Natural killer cell (primary cell): ENCODE measurements at regions of chr19 and their contacts with region 1.

Region 1: GRCh38 chr19:12789904-12790619 is 1.2 kb upstream of the JUNB start:
- DNase-seq: peak; percentile 94 to 95
- ATAC-seq: peak; percentile 35 to 56 (median 41)
- H3K4me3 ChIP-seq: peak overlapping the region; percentile 95
- H3K4me3 Mint-ChIP-seq: peak overlapping the region; percentile 96
- H3K27ac ChIP-seq: peak overlapping the region; percentile 93
- H3K27ac Mint-ChIP-seq: peak overlapping the region; percentile 97 to 99
- H3K4me1 ChIP-seq: peaks cover 57% of the 10 kb centered on the region
- H3K4me1 Mint-ChIP-seq: peaks cover 28 to 38% of the 10 kb centered on the region in 2 donors
- H3K27me3 ChIP-seq: no peaks in the 10 kb centered on the region
- H3K27me3 Mint-ChIP-seq: no peaks in the 10 kb centered on the region
- CTCF ChIP-seq: no peak

Region 2: DNA sequence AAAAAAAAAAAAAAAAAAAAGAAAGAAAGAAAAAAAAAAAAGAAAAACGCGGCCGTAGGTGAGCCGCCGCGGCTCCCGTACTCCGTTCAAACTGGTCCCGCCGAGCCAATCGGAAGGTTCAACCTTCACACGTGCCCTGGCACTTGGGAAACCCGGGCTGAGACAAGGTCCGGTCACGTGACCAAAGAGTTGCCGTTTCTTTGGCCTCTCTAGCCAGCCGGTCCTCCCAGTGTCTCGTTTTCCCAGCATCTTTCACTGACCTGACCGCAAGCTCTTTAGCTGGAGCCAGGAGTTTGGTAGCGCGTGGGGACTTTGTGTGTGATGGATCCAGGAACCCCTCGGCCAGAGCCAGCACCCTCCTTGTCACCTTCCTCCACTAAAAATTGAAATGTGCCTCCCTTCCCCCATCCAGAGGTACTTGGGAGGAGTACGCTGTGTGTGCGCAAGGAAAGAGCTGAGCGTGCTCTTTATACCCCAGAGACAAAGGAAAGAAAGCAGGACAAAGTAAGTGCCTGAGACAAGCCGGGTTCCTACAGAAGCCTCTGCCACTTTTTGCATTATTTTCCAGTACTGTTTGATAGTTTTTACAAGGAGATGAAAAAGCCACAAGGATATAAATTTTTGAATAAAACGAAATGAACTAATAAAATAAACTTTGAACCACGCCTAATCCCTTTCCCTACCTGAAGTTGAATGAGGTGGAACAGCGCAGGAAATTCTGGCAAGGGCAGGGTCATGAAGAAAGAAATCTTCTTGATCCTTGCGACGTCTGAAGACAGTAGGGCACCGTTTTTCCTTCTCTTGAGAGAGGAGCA is 67.3 kb before region 1 on chr19:
- intact Hi-C with region 1: loop called (anchors 5 kb)
- DNase-seq: peak; percentile 87 to 99
- ATAC-seq: peak; percentile 87 to 97 (median 95)
- H3K4me3 ChIP-seq: peak overlapping the region; percentile 60
- H3K4me3 Mint-ChIP-seq: peak overlapping the region; percentile 93
- H3K27ac ChIP-seq: peak overlapping the region; percentile 44
- H3K27ac Mint-ChIP-seq: peak overlapping the region; percentile 91 to 96
- H3K4me1 ChIP-seq: peaks cover 36% of the 10 kb centered on the region
- H3K4me1 Mint-ChIP-seq: peaks cover 26 to 42% of the 10 kb centered on the region in 2 donors
- H3K27me3 ChIP-seq: no peaks in the 10 kb centered on the region
- H3K27me3 Mint-ChIP-seq: no peaks in the 10 kb centered on the region
- CTCF ChIP-seq: no peak

Region 3: DNA sequence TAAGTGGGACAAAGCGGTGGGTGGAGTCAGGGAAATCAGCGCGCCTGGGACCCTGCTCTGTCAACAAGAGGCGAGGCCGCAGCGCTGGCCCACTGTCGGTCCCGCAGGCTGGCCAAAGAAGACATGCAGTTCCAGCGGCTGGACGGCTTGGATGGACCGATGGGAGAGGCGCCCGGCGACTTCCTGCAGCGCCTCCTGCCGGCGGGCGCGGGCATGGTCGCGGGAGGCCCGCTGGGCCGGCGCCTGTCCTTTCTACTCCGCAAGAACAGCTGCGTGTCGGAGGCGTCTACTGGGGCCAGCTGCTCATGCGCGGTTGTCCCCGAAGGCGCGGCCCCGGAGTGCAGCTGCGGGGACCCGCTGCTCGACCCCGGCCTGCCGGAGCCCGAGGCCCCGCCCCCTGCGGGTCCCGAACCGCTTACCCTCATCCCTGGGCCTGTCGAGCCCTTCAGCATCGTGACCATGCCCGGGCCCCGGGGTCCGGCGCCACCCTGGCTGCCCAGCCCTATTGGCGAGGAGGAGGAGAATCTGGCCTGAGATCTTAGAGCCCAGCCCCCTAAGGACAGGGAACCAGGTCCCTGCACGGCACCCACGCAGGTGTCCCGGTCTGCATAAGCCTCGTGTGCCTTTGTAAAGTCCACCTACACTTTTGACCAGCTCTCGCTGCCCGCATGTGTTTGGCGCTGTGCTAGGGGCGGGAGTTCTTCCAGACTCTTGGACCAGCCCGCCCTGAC is 32.4 kb before region 1 on chr19:
- intact Hi-C with region 1: no loop called
- DNase-seq: peak; percentile 70 to 77
- ATAC-seq: peak; percentile 80 to 83 (median 82)
- H3K4me3 ChIP-seq: no peak overlapping the region
- H3K4me3 Mint-ChIP-seq: no peak overlapping the region
- H3K27ac ChIP-seq: no peak overlapping the region
- H3K27ac Mint-ChIP-seq: no peak overlapping the region
- H3K4me1 ChIP-seq: peaks cover 9% of the 10 kb centered on the region
- H3K4me1 Mint-ChIP-seq: peaks cover 0 to 5% of the 10 kb centered on the region in 2 donors
- H3K27me3 ChIP-seq: peaks cover 2% of the 10 kb centered on the region
- H3K27me3 Mint-ChIP-seq: peaks cover 0 to 9% of the 10 kb centered on the region in 2 donors
- CTCF ChIP-seq: peak; percentile 83

Region 4: GRCh38 chr19:12938234-12939025 is 148.4 kb after region 1 on chr19 and contains the start of gene CALR:
- intact Hi-C with region 1: loop called (anchors 5 kb)
- DNase-seq: peak; percentile 99
- ATAC-seq: peak; percentile 84 to 96 (median 87)
- H3K4me3 ChIP-seq: peak within 1 kb of the TSS; percentile 85
- H3K4me3 Mint-ChIP-seq: peak within 1 kb of the TSS; percentile 96
- H3K27ac ChIP-seq: peak within 1 kb of the TSS; percentile 78
- H3K27ac Mint-ChIP-seq: peak within 1 kb of the TSS; percentile 96
- H3K4me1 ChIP-seq: peaks cover 59% of the 10 kb centered on the region
- H3K4me1 Mint-ChIP-seq: peaks cover 46 to 48% of the 10 kb centered on the region in 2 donors
- H3K27me3 ChIP-seq: no peaks in the 10 kb centered on the region
- H3K27me3 Mint-ChIP-seq: no peaks in the 10 kb centered on the region
- CTCF ChIP-seq: no peak
- total RNA-seq, gene CALR: 588 to 813 (median 763) TPM

Region 5: GRCh38 chr19:13104360-13104847 is 314.3 kb after region 1 on chr19:
- intact Hi-C with region 1: loop called (anchors 5 kb)
- DNase-seq: peak; percentile 69 to 77
- ATAC-seq: peak; percentile 58 to 62 (median 60)
- H3K4me3 ChIP-seq: peak overlapping the region; percentile 49
- H3K4me3 Mint-ChIP-seq: peak overlapping the region; percentile 93
- H3K27ac ChIP-seq: peak overlapping the region; percentile 84
- H3K27ac Mint-ChIP-seq: peak overlapping the region; percentile 70 to 88
- H3K4me1 ChIP-seq: peaks cover 69% of the 10 kb centered on the region
- H3K4me1 Mint-ChIP-seq: peaks cover 10 to 43% of the 10 kb centered on the region in 2 donors
- H3K27me3 ChIP-seq: no peaks in the 10 kb centered on the region
- H3K27me3 Mint-ChIP-seq: no peaks in the 10 kb centered on the region
- CTCF ChIP-seq: peak; percentile 97